HepG2 (cell line): ENCODE measurements at regions of chr1 and their contacts with region 1.

Region 1: DNA sequence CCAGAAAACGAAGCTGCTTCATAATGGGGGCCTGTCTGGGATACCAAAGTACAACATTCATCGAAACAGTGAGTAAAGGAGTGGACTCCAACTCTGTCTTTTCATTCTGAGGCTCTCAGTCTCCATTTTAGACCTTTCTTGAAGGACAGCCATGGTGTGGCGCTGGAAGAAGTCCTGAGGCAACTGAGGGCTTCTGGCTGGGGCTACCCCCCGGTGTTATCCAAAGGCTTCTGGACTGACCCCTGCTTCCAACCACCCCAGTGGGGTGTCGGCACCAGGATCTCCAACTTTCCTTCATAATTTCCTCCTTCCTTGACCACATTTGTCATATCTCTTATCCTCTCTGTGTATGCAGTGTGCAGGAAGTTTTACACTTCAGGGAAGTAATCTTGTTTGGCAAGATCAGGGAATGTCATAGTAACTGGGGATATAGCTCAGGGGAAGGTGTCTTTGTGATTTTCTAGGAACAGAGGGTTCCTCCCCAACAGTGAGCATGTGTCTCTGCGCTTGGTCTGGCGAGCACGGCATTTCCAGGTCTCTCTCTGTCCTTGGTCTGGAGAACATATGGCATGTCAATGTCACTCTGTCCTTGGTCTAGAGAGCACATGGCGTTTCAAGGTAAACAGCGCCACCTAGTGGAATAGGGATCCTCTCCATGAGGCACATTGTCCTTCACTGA is 19.4 kb upstream of the BSDC1 start:
- DNase-seq: peak; percentile 83
- ATAC-seq: peak; percentile 98
- H3K4me3 ChIP-seq: peak overlapping the region in 1 of 3 experiments; percentile 31; a peak in 2 of 6 replicates
- H3K27ac ChIP-seq: no peak overlapping the region
- H3K4me1 ChIP-seq: peaks cover 25% of the 10 kb centered on the region
- H3K27me3 ChIP-seq: peaks cover 2 to 5% of the 10 kb centered on the region in 2 experiments; a peak in 2 of 5 replicates
- CTCF ChIP-seq: peak; percentile 96
- EP300 ChIP-seq: no peak
- POLR2A ChIP-seq: no peak
- RAD21 ChIP-seq: peak; percentile 89

Region 2: DNA sequence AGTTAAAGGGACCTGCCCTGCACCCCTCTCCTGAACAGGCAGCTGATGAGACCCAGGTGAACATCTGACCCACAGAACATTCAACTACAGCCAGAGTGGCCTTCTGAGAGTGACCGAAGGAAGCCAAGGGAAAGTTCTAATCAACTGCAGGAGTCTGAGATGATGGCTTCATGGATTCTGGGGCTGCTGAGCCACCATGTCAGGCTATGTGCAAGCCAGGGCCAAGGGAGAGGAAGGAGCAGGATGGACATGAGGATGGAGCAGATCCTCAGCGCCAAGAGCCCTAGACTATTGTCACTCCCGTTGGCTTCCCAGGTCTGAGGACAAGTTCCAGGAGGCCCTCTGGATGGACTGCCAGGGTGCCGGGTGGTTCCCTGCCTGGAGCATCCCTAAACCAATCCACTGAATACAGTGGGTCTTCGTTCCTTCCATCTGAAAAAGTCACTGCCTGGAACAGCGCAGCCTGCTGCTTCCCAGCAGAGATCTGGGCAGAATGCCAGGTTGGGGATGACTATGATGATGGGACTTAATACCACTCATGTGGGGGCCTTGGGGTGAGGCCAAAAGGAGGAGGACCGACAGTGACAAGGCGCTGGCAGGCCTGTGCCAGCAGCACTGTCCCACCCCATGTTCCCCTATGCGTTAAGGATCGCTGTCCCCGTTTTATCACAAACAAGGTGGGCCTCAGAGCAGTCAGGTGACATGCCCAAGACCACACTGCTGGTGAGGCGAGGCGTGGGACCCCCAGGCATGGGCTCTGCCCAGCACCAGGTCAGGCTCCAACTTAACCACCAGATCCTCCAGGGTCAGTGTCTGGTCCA is 617.6 kb before region 1 on chr1:
- CTCF ChIA-PET with region 1: no interaction called
- POLR2A ChIA-PET with region 1: no interaction called
- in situ Hi-C with region 1: no loop called
- intact Hi-C with region 1: no loop called
- DNase-seq: no peak
- ATAC-seq: no peak
- H3K4me3 ChIP-seq: no peak overlapping the region
- H3K27ac ChIP-seq: no peak overlapping the region
- H3K4me1 ChIP-seq: no peaks in the 10 kb centered on the region
- H3K27me3 ChIP-seq: peaks cover 6 to 48% of the 10 kb centered on the region in 2 experiments; a peak in 4 of 5 replicates
- CTCF ChIP-seq: no peak
- EP300 ChIP-seq: no peak
- POLR2A ChIP-seq: no peak
- RAD21 ChIP-seq: no peak

Region 3: GRCh38 chr1:32215629-32216480 is 197.8 kb before region 1 on chr1:
- CTCF ChIA-PET with region 1: interaction called, 11 read pairs
- POLR2A ChIA-PET with region 1: no interaction called
- in situ Hi-C with region 1: loop called (anchors 10 kb)
- intact Hi-C with region 1: loop called (anchors 2 kb)
- DNase-seq: peak; percentile 61
- ATAC-seq: peak; percentile 95
- H3K4me3 ChIP-seq: no peak overlapping the region
- H3K27ac ChIP-seq: no peak overlapping the region
- H3K4me1 ChIP-seq: peaks cover 16% of the 10 kb centered on the region
- H3K27me3 ChIP-seq: no peaks in the 10 kb centered on the region
- CTCF ChIP-seq: peak; percentile 89
- EP300 ChIP-seq: no peak
- POLR2A ChIP-seq: no peak
- RAD21 ChIP-seq: peak; percentile 90